ENCODE measurements at regions of chr6 and their contacts with region 1.

Region 1: GRCh38 chr6:161273752-161274487 is at the start of gene AGPAT4:
- DNase-seq: peak; percentile 44 to 90
- H3K4me3 ChIP-seq: peak within 1 kb of the TSS; percentile 74 to 79
- H3K27ac ChIP-seq: peak within 1 kb of the TSS; percentile 56 to 71
- H3K4me1 ChIP-seq: peaks cover 0 to 4% of the 10 kb centered on the region in 2 donors
- H3K27me3 ChIP-seq: no peaks in the 10 kb centered on the region
- CTCF ChIP-seq: no peak
- total RNA-seq, gene AGPAT4: 6.8 TPM

Region 2: GRCh38 chr6:160992061-160992979 is 281.6 kb before region 1 on chr6:
- intact Hi-C with region 1: loop called (anchors 5 kb)
- DNase-seq: no peak
- H3K4me3 ChIP-seq: peak overlapping the region; percentile 81 to 85
- H3K27ac ChIP-seq: peak overlapping the region; percentile 90 to 95
- H3K4me1 ChIP-seq: peaks cover 2 to 11% of the 10 kb centered on the region in 2 donors
- H3K27me3 ChIP-seq: no peaks in the 10 kb centered on the region
- CTCF ChIP-seq: peak; percentile 29 to 60 (median 53)

Region 3: GRCh38 chr6:161228921-161229591 is 44.9 kb before region 1 on chr6:
- intact Hi-C with region 1: no loop called
- DNase-seq: no peak
- H3K4me3 ChIP-seq: peak overlapping the region in 1 of 2 donors; percentile 2
- H3K27ac ChIP-seq: peak overlapping the region; percentile 32 to 48
- H3K4me1 ChIP-seq: peaks cover 0 to 3% of the 10 kb centered on the region in 2 donors
- H3K27me3 ChIP-seq: no peaks in the 10 kb centered on the region
- CTCF ChIP-seq: no peak

Region 4: DNA sequence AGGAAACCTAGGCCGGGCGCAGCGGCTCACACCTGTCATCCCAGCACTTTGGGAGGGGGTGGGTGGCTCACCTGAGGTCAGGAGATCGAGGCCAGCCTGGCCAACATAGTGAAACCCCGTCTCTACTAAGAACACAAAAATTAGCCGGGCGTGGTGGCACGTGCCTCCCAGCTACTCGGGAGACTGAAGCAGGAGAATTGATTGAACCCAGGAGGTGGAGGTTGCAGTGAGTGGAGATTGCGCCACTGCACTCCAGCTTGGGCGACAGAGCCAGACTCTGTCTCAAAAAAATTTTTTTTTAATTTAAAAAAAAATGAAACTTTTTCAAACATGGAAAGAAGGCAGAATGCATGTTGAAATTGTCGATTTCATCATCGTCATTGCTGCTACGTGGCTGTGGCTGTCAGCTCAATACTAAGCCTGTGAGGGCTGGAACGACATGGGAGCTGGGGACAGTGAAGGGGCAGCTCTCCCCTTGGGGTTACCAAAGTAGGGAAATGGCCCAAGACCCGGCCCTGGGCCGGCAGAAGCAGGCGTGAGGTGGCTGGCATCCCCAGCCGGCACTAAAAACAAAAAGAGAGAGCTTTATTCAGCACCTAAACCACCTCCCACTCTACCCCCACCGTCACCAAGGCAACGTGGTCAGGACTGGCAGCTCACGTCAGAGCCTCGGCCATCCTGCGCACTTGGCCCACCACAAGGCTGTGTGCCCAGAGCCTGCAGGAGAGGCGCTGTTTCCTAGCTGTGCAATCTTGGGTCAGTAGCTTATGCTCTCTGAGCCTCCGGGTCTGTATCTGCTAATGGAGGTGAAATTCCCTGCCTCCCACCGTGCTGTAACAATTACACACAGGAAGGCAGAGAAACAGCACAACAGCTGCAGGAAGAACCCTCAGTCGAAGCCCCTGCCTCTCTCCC is 30.9 kb before region 1 on chr6:
- intact Hi-C with region 1: no loop called
- DNase-seq: no peak
- H3K4me3 ChIP-seq: no peak overlapping the region
- H3K27ac ChIP-seq: no peak overlapping the region
- H3K4me1 ChIP-seq: no peaks in the 10 kb centered on the region
- H3K27me3 ChIP-seq: no peaks in the 10 kb centered on the region
- CTCF ChIP-seq: no peak

Region 5: DNA sequence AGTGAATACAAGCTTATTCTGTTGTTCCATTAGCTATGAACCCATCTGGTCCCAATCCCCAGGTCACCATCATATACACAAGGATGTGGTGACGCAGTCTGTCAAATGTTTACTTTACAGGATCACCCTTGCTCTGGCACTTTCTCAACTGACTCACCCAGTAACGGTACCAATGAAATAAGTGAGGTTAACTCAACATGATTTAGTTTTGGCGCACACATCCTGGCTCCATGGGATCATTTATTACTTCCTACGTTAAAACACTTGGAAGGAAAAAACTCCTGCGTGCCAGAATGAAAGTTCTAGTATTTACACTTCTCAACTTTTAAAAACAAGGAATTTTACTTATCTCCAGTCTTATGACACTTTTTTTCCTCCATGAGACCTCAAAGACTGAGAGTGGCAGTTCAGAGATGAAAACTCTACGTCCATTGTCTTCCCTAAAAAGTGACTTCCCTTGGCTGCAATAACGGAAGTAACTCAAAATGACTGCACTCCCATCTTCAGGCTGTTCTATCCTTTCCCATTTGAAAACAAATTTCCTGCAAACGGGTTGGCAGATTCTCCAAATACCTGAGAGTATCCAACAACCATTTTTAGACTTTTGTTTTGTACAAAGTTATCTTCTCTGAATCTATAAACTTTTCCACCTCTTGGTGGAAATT is 16.0 kb before region 1 on chr6:
- intact Hi-C with region 1: loop called (anchors 1 kb)
- DNase-seq: peak in 1 of 2 donors; percentile 82
- H3K4me3 ChIP-seq: no peak overlapping the region
- H3K27ac ChIP-seq: peak overlapping the region; percentile 54 to 68
- H3K4me1 ChIP-seq: peaks cover 0 to 6% of the 10 kb centered on the region in 2 donors
- H3K27me3 ChIP-seq: no peaks in the 10 kb centered on the region
- CTCF ChIP-seq: no peak